AG04450 (cell line): ENCODE measurements at regions of chr1 and their contacts with region 1.

Region 1: DNA sequence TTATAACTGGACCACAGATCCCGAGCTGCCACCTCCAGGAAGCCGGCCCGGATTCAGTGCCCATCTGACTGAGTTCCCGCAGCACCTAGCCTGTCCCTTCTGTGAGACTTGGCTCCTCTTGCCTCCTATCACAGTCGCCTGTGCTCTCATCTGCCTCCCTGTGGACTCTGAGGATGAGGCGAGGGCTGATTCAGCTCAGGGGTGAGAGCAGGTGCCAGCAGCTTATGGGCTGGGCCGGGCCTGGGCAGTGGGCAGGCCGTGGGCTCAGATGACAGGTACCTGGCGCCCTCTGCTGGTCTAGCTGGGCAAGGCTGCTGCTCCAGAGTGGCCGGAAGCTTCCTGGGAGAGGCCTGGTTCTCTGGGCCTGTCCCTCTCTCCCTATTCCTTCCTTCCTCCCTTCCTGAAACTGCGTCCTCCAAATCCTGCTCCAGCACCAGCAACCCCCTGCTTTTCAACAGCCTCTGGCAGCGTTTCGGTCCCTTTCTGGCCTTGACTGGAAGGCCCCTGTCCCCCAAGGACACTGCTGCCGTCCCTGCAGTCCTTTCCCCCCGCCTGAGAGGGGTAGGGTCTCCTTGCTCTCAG is 17.3 kb upstream of the PCSK9 start:
- DNase-seq: peak; percentile 74
- H3K4me3 ChIP-seq: no peak overlapping the region
- H3K27ac ChIP-seq: no peak overlapping the region
- H3K27me3 ChIP-seq: peaks cover 30% of the 10 kb centered on the region
- CTCF ChIP-seq: peak; percentile 94

Region 2: GRCh38 chr1:54950369-54951163 is 71.5 kb before region 1 on chr1:
- CTCF ChIA-PET with region 1: interaction called, 360 read pairs
- POLR2A ChIA-PET with region 1: interaction called, 11 read pairs
- DNase-seq: peak; percentile 70
- H3K4me3 ChIP-seq: peak overlapping the region; percentile 29; the same call in 1 of the 2 replicates
- H3K27ac ChIP-seq: no peak overlapping the region
- H3K27me3 ChIP-seq: no peaks in the 10 kb centered on the region
- CTCF ChIP-seq: peak; percentile 79

Region 3: DNA sequence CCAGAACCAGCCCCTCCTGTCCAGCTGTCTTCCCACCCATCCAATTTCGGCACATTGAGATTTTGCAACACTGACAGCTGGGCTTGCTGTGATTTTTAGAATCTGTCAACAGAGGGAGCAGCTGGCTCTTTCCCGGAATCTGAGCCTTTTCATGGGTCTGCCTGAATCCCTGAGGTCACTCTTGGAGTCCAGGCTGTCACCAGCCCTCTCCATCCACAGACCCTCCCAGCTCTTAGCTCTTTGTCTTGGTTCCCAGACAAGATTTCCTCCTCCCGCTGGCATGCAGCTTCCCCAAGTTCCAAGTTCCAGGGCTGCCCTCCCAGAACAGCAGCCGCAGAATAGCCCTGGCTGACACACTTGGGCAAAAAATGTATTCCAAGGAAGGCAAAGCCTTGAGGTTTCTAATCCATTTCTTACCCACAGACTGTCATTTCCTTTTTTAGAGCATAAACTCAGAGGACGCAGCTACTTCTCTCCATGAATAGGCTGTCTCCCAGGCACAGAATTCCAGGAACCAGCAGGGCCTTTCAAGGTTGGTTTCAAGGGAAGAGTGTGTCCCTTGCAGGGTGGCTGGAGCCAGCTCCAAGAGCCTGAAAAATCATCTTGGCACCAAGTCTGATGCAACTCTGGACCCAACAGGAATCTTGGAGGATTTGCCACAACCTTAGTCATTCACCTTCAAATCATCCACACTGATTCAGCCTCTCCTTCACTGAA is 48.7 kb before region 1 on chr1:
- CTCF ChIA-PET with region 1: interaction called, 14 read pairs
- POLR2A ChIA-PET with region 1: no interaction called
- DNase-seq: no peak
- H3K4me3 ChIP-seq: no peak overlapping the region
- H3K27ac ChIP-seq: peak overlapping the region; percentile 31
- H3K27me3 ChIP-seq: peaks cover 10% of the 10 kb centered on the region
- CTCF ChIP-seq: peak; percentile 61

Region 4: DNA sequence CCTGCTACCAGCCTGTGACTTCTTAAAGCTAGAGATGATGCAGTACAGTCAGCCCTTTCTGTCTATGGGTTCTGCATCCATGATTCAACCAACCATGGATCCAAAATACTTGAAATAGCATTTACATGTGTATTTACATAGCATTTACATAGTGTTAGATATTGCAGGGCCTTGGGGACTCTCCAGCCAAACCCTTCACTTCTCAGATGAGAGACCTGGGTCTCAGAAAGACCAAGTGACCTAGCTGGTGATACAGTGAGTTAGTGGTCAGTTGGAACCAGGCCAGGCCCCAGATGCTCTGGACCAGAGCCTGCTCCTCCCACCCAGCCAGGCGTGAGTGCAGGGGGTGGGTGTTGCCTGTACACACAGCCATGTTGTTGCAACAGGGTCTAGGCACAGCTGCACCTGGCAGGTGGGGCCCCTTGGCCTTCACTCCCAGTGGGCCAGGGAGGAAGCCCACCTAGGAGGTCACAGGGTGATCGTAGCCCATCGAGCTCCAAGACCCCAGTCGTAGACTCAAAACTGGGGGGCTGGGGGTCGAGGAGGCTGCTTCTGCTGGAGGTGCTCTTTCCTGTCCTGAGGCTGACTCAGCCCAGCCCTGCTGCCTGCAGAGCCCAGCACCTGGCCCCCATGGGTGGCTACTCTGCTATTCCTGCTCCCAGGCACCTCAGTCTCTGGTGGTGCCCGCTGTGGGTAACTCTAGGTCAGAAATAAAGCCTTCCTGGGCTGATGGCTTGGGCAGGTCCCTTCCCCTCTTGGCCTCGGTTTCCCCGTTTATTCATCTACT is 33.9 kb before region 1 on chr1:
- CTCF ChIA-PET with region 1: interaction called, 12 read pairs
- POLR2A ChIA-PET with region 1: no interaction called
- DNase-seq: peak; percentile 42
- H3K4me3 ChIP-seq: no peak overlapping the region
- H3K27ac ChIP-seq: no peak overlapping the region
- H3K27me3 ChIP-seq: peaks cover 29% of the 10 kb centered on the region
- CTCF ChIP-seq: no peak

Region 5: GRCh38 chr1:55007625-55008024 is 14.4 kb before region 1 on chr1:
- CTCF ChIA-PET with region 1: interaction called, 32 read pairs
- POLR2A ChIA-PET with region 1: no interaction called
- DNase-seq: peak; percentile 13
- H3K4me3 ChIP-seq: no peak overlapping the region
- H3K27ac ChIP-seq: no peak overlapping the region
- H3K27me3 ChIP-seq: peaks cover 12% of the 10 kb centered on the region
- CTCF ChIP-seq: no peak